Activated B cell treated with CpG ODN at 0.5 μM for 24 hours (primary cell): ENCODE measurements at regions of chr1 and their contacts with region 1.

Region 1: DNA sequence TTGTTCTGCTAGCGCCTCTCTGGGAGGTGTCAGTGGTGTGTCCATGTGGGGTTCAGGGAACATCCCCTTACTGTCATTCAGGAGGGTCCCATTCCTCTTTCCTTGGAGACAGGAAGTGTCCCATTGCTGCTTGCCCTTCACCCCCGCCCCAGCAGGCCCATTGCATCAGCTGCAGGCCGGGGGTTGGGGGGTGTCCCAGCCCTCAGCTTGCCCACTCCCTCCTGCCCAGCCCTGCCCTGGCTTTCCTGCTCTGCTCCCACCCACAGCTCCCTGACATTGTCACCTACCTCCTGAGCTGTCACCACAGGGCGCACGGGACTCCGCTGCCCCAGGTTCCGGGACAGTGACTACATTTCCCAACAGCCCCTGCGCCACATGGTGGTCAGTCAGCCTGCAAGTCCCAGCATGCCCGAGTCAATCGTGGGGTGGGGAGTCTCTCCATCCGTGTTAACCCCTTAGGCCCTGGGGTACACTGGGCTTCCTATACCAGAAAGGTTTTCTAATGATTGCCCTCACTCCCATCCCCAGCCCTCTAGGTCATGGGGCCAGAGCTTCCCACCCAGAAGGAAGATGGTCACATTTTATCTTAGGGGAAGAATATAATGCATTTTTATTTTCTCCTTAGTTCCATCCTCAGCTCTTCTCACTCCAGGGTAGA is at the start of gene INPP5B:
- DNase-seq: peak; percentile 74
- ATAC-seq: peak; percentile 100
- H3K4me3 Mint-ChIP-seq: peak within 1 kb of the TSS; percentile 100
- H3K27ac Mint-ChIP-seq: peak within 1 kb of the TSS; percentile 97
- H3K4me1 Mint-ChIP-seq: peaks cover 23% of the 10 kb centered on the region
- H3K27me3 Mint-ChIP-seq: no peaks in the 10 kb centered on the region
- CTCF ChIP-seq: no peak
- total RNA-seq, gene INPP5B: 63.4 and 70.3 TPM in 2 replicates

Region 2: DNA sequence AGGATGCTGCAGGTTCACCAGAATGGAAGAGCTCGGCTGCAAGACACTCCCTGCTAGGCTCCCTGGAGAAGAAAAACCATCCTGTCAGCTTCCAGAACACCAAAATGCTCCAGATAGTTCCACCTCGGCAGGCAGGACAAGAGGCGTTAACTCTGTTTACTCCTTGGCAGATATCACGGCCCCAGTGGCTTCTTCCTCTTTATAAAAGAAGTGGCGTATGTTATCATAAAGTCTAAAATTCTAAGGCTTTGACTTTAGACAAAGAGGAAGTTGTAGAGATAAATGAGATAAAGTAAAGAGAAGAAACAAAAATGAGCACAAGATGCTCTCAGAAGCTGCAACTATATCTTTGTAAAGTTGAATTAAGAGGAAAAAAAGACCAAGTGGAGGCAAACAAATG is 63.2 kb before region 1 on chr1:
- CTCF ChIA-PET with region 1: no interaction called
- POLR2A ChIA-PET with region 1: no interaction called
- intact Hi-C with region 1: no loop called
- DNase-seq: no peak
- ATAC-seq: no peak
- H3K4me3 Mint-ChIP-seq: no peak overlapping the region
- H3K27ac Mint-ChIP-seq: peak overlapping the region; percentile 47
- H3K4me1 Mint-ChIP-seq: peaks cover 6% of the 10 kb centered on the region
- H3K27me3 Mint-ChIP-seq: no peaks in the 10 kb centered on the region
- CTCF ChIP-seq: no peak

Region 3: DNA sequence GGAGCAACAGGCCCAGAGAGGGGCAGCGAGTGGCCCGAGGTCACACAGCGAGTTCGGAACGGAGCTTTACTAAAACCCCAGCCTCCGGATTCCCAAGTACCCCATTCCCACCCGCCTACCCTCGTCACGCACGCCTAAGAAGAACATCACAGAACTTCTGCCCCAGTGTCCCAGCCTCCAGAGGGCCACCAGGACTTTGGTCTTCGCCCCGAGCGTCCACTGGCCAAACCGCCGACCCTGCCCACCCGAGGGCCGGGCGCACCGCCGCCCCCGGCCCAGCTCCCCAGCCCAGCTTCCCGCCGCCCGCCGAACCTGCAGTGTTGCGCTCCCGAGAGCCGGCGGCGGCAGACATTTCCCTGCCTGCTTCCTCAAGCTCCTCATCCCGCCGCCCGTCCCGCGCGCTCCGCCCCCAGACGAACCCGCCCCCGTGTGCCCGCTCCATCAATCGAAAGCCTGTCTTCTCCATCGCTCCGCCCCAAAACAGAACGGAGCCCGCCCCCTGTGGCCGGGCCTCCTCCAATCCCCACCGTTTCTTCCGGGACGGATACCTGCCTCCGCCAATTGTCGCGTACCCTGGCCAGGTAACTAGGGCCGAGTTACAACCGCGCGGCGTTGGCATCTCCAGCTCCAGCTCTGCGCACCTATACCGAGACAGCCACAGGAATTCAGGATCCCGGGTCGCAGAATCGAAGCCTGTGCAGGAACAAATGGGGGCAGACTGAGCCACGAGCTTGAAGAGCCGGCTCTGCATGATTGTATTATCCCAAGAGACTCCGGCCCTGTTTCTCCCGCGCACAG is 15.3 kb before region 1 on chr1:
- CTCF ChIA-PET with region 1: no interaction called
- POLR2A ChIA-PET with region 1: interaction called, 17 read pairs
- intact Hi-C with region 1: loop called (anchors 1 kb)
- DNase-seq: peak; percentile 94
- ATAC-seq: peak; percentile 99
- H3K4me3 Mint-ChIP-seq: peak overlapping the region; percentile 99
- H3K27ac Mint-ChIP-seq: peak overlapping the region; percentile 87
- H3K4me1 Mint-ChIP-seq: peaks cover 48% of the 10 kb centered on the region
- H3K27me3 Mint-ChIP-seq: no peaks in the 10 kb centered on the region
- CTCF ChIP-seq: no peak

Region 4: GRCh38 chr1:37965301-37965700 is 18.5 kb after region 1 on chr1:
- CTCF ChIA-PET with region 1: no interaction called
- POLR2A ChIA-PET with region 1: no interaction called
- intact Hi-C with region 1: no loop called
- DNase-seq: no peak
- ATAC-seq: no peak
- H3K4me3 Mint-ChIP-seq: no peak overlapping the region
- H3K27ac Mint-ChIP-seq: no peak overlapping the region
- H3K4me1 Mint-ChIP-seq: no peaks in the 10 kb centered on the region
- H3K27me3 Mint-ChIP-seq: no peaks in the 10 kb centered on the region
- CTCF ChIP-seq: no peak

Region 5: GRCh38 chr1:38012363-38013226 is 65.8 kb after region 1 on chr1 and contains the start of gene UTP11:
- CTCF ChIA-PET with region 1: no interaction called
- POLR2A ChIA-PET with region 1: no interaction called
- intact Hi-C with region 1: loop called (anchors 1 kb)
- DNase-seq: peak; percentile 74
- ATAC-seq: peak; percentile 97
- H3K4me3 Mint-ChIP-seq: peak within 1 kb of the TSS; percentile 100
- H3K27ac Mint-ChIP-seq: peak within 1 kb of the TSS; percentile 94
- H3K4me1 Mint-ChIP-seq: peaks cover 27% of the 10 kb centered on the region
- H3K27me3 Mint-ChIP-seq: no peaks in the 10 kb centered on the region
- CTCF ChIP-seq: no peak
- total RNA-seq, gene UTP11: 26.1 and 28.6 TPM in 2 replicates